ENCODE measurements at regions of chr11 and their contacts with region 1.

Region 1: GRCh38 chr11:9757809-9758636 is 94.1 kb downstream of the SWAP70 start:
- DNase-seq: no peak
- H3K4me3 ChIP-seq: peak overlapping the region; percentile 43
- CTCF ChIP-seq: peak; percentile 61

Region 2: DNA sequence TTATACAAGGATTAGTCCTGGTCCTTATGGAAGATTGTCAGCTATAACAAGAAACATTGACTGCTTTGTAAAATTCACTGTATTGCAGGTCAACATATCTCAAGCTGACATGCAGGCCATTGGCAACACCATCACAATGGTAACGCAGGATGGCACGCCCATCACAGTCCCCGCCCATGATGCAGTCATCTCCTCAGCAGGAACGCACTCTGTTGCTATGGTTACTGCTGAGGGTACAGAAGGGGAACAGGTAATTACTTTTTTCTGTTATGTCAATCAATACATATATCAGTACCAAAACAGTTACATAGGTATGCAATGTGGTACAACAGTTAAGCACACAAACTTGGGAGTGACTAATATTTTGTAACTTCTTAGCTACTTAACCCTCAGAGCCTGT is 241.9 kb before region 1 on chr11:
- CTCF ChIA-PET with region 1: no interaction called
- POLR2A ChIA-PET with region 1: no interaction called
- DNase-seq: no peak
- H3K4me3 ChIP-seq: no peak overlapping the region
- CTCF ChIP-seq: no peak

Region 3: DNA sequence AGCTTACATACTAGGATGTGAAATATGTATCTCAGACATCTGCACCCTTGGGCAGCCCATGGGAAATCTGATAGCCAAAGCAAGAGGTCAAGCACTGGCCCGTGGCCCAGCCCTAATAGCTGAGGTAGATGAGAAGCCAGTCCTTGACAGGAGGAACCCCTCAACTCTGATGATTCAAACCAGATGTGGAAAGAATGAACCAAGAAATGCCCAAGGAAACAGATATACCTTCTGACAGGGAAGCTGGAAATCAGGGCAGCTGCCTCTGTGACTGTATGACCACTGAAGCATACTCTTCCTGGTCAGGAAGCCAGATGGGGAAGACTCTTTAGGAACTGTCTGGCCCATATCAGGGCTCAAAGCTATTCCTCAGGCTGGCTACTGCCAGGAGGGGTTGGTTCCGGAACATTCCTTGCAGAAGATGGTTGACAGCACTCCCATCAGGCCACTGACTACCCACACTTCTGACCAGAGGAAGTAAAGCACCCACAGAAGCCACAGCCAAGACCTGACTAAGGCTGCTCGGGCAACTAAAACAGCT is 30.0 kb after region 1 on chr11:
- CTCF ChIA-PET with region 1: interaction called, 3 read pairs
- POLR2A ChIA-PET with region 1: interaction called, 32 read pairs
- DNase-seq: peak; percentile 55
- H3K4me3 ChIP-seq: no peak overlapping the region
- CTCF ChIP-seq: no peak

Region 4: DNA sequence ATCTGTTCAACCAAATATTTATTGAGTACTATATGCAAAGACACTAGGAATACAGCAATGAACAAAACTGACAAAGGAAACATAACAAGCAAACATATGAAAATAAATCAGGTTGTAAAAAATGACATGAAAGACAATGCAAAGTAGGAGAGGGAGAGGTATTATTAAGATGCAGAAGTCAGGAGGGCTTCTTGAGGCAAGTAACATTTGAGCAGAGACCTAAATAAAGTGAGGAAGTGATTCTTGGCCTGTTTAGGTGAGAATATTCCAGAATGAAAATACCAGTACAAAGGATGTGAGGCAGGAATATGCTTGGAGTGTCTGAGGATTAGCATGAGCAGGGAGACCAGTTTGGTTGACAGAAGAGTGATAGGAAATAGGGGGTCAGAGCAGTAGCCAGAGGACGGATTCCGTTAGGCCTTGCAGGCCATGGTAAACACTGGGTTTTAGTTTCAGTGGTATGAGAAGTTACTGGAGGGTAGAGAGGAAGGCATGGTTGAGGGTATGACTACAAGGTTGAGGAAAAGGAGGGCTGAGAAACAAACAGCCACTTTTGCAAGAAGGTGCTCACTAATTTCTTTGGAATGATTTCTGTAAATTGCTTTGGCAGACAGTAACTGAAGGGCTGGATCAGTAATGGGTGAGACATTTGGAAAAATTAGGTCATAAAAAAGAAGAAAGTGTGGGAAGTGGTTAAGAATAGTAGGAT is 97.7 kb after region 1 on chr11:
- CTCF ChIA-PET with region 1: interaction called, 16 read pairs
- POLR2A ChIA-PET with region 1: interaction called, 16 read pairs
- DNase-seq: peak; percentile 60
- H3K4me3 ChIP-seq: no peak overlapping the region
- CTCF ChIP-seq: no peak

Region 5: GRCh38 chr11:9906043-9906791 is 148.2 kb after region 1 on chr11:
- CTCF ChIA-PET with region 1: interaction called, 12 read pairs
- POLR2A ChIA-PET with region 1: interaction called, 25 read pairs
- DNase-seq: peak; percentile 96
- H3K4me3 ChIP-seq: no peak overlapping the region
- CTCF ChIP-seq: no peak

Region 6: GRCh38 chr11:10322830-10323792 is 565.1 kb after region 1 on chr11:
- CTCF ChIA-PET with region 1: interaction called, 17 read pairs
- POLR2A ChIA-PET with region 1: interaction called, 6 read pairs
- DNase-seq: peak; percentile 67
- H3K4me3 ChIP-seq: no peak overlapping the region
- CTCF ChIP-seq: no peak